Panc1 (cell line): ENCODE measurements at regions of chr13 and their contacts with region 1.

Region 1: DNA sequence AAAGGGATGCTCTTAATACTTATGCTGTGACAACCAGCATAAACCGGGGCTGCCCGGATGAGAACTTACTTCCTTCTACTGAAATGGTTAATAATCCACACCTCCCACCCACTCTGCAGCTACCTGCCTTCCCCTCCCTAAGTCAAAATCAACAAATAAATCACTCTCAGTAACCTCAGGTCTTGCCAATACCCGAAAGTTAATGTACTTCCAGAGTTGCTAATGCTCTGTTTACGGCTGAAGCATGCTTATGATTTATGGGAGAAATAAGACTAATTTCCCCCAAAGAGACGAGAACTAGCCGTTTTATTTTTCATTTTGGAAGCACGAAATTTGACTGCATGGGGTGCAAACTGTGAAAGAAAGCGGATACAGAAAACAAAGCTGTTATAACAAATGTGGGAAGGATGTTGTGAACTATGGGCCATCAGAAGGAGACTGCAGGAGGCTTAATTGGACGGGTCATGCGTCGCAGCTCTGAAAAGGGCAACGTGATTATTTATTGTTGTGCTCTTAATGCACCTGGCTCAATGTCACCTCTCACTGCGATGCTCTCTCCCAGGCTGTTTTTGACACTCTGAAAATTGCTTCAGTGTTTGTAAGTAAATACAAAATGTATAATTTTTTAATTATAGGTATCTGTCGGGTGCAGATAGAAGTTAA is 114.0 kb upstream of the SLC7A1 start:
- DNase-seq: no peak
- ATAC-seq: no peak
- H3K4me3 ChIP-seq: no peak overlapping the region
- H3K27ac ChIP-seq: no peak overlapping the region
- H3K4me1 ChIP-seq: no peaks in the 10 kb centered on the region
- H3K27me3 ChIP-seq: no peaks in the 10 kb centered on the region; the same call in 1 of the 2 replicates
- CTCF ChIP-seq: no peak

Region 2: DNA sequence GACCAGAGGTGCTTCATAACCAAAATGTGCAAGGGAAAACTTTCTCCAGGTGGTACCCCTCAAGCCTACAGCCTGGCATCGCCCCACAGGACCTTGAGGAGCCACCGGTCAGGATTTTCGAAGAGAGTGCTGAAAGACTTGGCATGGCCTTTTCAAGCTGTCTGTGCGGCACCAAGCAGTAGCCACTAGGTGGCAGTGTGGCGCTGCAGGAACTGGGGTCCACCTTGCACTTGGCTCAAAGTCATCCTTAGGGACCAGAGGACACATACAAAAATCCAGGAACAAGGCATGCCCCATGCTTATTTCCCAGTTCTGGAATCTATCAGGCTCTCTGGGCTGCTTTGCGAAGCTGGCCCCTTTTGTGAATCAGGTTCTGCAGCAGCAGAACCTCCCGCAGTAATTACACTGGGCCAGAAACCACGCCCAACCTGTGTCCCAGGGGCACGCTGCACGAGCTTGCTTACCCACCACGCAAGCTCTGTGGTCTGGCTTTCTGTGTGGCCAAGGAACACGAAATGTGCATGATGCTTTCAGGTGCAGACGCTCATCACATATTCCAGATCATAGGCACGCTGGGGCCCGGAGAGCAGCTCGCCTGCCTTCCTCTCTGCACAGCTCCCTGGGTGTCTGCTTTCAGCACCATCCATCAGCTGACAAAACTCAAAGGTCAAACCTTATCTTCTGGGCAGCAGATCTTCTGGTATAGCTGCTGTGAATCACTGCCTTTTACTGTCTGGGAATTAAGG is 201.2 kb before region 1 on chr13:
- CTCF ChIA-PET with region 1: interaction called, 4 read pairs
- POLR2A ChIA-PET with region 1: no interaction called
- in situ Hi-C with region 1: no loop called
- intact Hi-C with region 1: loop called (anchors 2 kb)
- DNase-seq: peak; percentile 56
- ATAC-seq: peak; percentile 89
- H3K4me3 ChIP-seq: no peak overlapping the region
- H3K27ac ChIP-seq: no peak overlapping the region
- H3K4me1 ChIP-seq: no peaks in the 10 kb centered on the region
- H3K27me3 ChIP-seq: no peaks in the 10 kb centered on the region
- CTCF ChIP-seq: peak; percentile 91

Region 3: GRCh38 chr13:29991343-29991742 is 281.8 kb after region 1 on chr13:
- CTCF ChIA-PET with region 1: no interaction called
- POLR2A ChIA-PET with region 1: no interaction called
- in situ Hi-C with region 1: no loop called
- intact Hi-C with region 1: no loop called
- DNase-seq: no peak
- ATAC-seq: no peak
- H3K4me3 ChIP-seq: no peak overlapping the region
- H3K27ac ChIP-seq: no peak overlapping the region
- H3K4me1 ChIP-seq: no peaks in the 10 kb centered on the region
- H3K27me3 ChIP-seq: no peaks in the 10 kb centered on the region
- CTCF ChIP-seq: no peak